ENCODE measurements at regions of chr7 and their contacts with region 1.

Region 1: GRCh38 chr7:7681179-7681935 is 37.0 kb downstream of the RPA3 start:
- DNase-seq: peak; percentile 78
- ATAC-seq: peak; percentile 84
- H3K4me3 ChIP-seq: no peak overlapping the region
- H3K4me3 Mint-ChIP-seq: no peak overlapping the region
- H3K27ac ChIP-seq: peak overlapping the region; percentile 48 to 54
- H3K27ac Mint-ChIP-seq: peak overlapping the region; percentile 89
- H3K4me1 ChIP-seq: peaks cover 3 to 11% of the 10 kb centered on the region in 2 donors
- H3K4me1 Mint-ChIP-seq: peaks cover 28% of the 10 kb centered on the region
- H3K27me3 ChIP-seq: no peaks in the 10 kb centered on the region
- H3K27me3 Mint-ChIP-seq: no peaks in the 10 kb centered on the region
- CTCF ChIP-seq: peak; percentile 81

Region 2: GRCh38 chr7:7665031-7665742 is 16.2 kb before region 1 on chr7:
- CTCF ChIA-PET with region 1: interaction called, 10 read pairs
- POLR2A ChIA-PET with region 1: no interaction called
- intact Hi-C with region 1: no loop called
- DNase-seq: no peak
- ATAC-seq: no peak
- H3K4me3 ChIP-seq: no peak overlapping the region
- H3K4me3 Mint-ChIP-seq: no peak overlapping the region
- H3K27ac ChIP-seq: no peak overlapping the region
- H3K27ac Mint-ChIP-seq: no peak overlapping the region
- H3K4me1 ChIP-seq: no peaks in the 10 kb centered on the region
- H3K4me1 Mint-ChIP-seq: peaks cover 29% of the 10 kb centered on the region
- H3K27me3 ChIP-seq: no peaks in the 10 kb centered on the region
- H3K27me3 Mint-ChIP-seq: no peaks in the 10 kb centered on the region
- CTCF ChIP-seq: no peak

Region 3: GRCh38 chr7:7732566-7733290 is 51.4 kb after region 1 on chr7:
- CTCF ChIA-PET with region 1: no interaction called
- POLR2A ChIA-PET with region 1: no interaction called
- intact Hi-C with region 1: no loop called
- DNase-seq: no peak
- ATAC-seq: no peak
- H3K4me3 ChIP-seq: no peak overlapping the region
- H3K4me3 Mint-ChIP-seq: no peak overlapping the region
- H3K27ac ChIP-seq: no peak overlapping the region
- H3K27ac Mint-ChIP-seq: peak overlapping the region; percentile 20
- H3K4me1 ChIP-seq: no peaks in the 10 kb centered on the region
- H3K4me1 Mint-ChIP-seq: peaks cover 2% of the 10 kb centered on the region
- H3K27me3 ChIP-seq: no peaks in the 10 kb centered on the region
- H3K27me3 Mint-ChIP-seq: no peaks in the 10 kb centered on the region
- CTCF ChIP-seq: no peak

Region 4: GRCh38 chr7:7761340-7761980 is 80.1 kb after region 1 on chr7:
- CTCF ChIA-PET with region 1: interaction called, 31 read pairs
- POLR2A ChIA-PET with region 1: no interaction called
- intact Hi-C with region 1: loop called (anchors 1 kb)
- DNase-seq: peak; percentile 63
- ATAC-seq: peak; percentile 64
- H3K4me3 ChIP-seq: peak overlapping the region; percentile 46 to 73 (median 60)
- H3K4me3 Mint-ChIP-seq: peak overlapping the region; percentile 91
- H3K27ac ChIP-seq: peak overlapping the region; percentile 47 to 75
- H3K27ac Mint-ChIP-seq: peak overlapping the region; percentile 89
- H3K4me1 ChIP-seq: peaks cover 17 to 22% of the 10 kb centered on the region in 2 donors
- H3K4me1 Mint-ChIP-seq: peaks cover 35% of the 10 kb centered on the region
- H3K27me3 ChIP-seq: no peaks in the 10 kb centered on the region
- H3K27me3 Mint-ChIP-seq: no peaks in the 10 kb centered on the region
- CTCF ChIP-seq: peak; percentile 68

Region 5: GRCh38 chr7:8092140-8092539 is 410.8 kb after region 1 on chr7:
- CTCF ChIA-PET with region 1: interaction called, 10 read pairs
- POLR2A ChIA-PET with region 1: no interaction called
- intact Hi-C with region 1: no loop called
- DNase-seq: no peak
- ATAC-seq: no peak
- H3K4me3 ChIP-seq: no peak overlapping the region
- H3K4me3 Mint-ChIP-seq: no peak overlapping the region
- H3K27ac ChIP-seq: no peak overlapping the region
- H3K27ac Mint-ChIP-seq: no peak overlapping the region
- H3K4me1 ChIP-seq: no peaks in the 10 kb centered on the region
- H3K4me1 Mint-ChIP-seq: no peaks in the 10 kb centered on the region
- H3K27me3 ChIP-seq: no peaks in the 10 kb centered on the region
- H3K27me3 Mint-ChIP-seq: no peaks in the 10 kb centered on the region
- CTCF ChIP-seq: no peak

Region 6: GRCh38 chr7:8217200-8218068 is 536.1 kb after region 1 on chr7:
- CTCF ChIA-PET with region 1: interaction called, 50 read pairs
- POLR2A ChIA-PET with region 1: no interaction called
- intact Hi-C with region 1: loop called (anchors 1 kb)
- DNase-seq: peak; percentile 78
- ATAC-seq: peak; percentile 57
- H3K4me3 ChIP-seq: no peak overlapping the region
- H3K4me3 Mint-ChIP-seq: no peak overlapping the region
- H3K27ac ChIP-seq: no peak overlapping the region
- H3K27ac Mint-ChIP-seq: no peak overlapping the region
- H3K4me1 ChIP-seq: no peaks in the 10 kb centered on the region
- H3K4me1 Mint-ChIP-seq: peaks cover 2% of the 10 kb centered on the region
- H3K27me3 ChIP-seq: no peaks in the 10 kb centered on the region
- H3K27me3 Mint-ChIP-seq: no peaks in the 10 kb centered on the region
- CTCF ChIP-seq: peak; percentile 81

Measured in B cell (primary cell).